Activated CD4-positive, alpha-beta T cell treated with anti-CD3 and anti-CD28 coated beads for 36 hours (primary cell): ENCODE measurements at regions of chr17 and their contacts with region 1.

Region 1: DNA sequence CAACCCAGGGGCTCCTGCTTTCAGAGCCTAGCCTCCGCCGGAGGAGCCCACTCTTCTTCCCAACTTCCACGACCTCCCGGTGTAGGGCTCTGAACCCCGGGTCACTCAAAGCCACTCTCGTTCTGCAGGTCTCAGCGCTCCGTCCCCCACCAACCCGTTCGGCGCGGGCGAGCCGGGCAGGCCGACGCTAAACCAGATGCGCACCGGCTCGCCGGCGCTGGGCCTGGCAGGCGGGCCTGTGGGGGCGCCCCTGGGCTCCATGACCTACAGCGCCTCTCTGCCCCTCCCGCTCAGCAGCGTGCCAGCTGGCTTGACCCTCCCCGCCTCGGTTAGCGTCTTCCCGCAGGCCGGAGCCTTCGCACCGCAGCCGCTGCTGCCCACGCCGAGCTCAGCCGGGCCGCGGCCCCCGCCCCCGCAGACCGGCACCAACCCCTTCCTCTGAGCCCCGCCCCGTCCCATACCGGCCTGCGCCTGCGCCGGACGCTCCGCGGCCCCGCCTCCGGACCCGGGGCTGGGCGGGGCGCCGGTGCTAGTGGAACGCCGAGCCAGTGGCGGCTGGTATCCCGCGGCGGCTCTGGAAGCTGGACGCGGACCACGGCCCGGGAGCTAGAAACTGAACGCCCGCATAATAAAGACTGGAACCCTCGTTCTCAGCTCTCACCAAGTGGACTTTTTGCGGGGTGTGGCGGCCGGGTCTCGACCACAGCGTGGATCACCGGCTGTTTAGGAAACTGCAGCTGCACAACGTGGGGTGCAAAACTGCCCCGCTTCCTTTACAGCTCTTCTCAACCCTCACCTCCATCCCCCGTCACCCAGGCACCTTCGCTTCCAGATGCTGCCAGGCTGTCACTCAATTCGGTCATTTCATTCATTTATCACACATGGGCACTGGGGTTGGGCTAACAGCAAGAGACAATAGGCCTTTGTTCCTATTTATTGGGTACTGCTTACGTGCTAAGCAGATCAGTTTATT is 5.0 kb upstream of the SPATA20 start:
- DNase-seq: peak; percentile 91
- ATAC-seq: peak; percentile 87
- H3K4me3 Mint-ChIP-seq: peak overlapping the region; percentile 72
- H3K27ac Mint-ChIP-seq: peak overlapping the region; percentile 82
- H3K4me1 Mint-ChIP-seq: peaks cover 11% of the 10 kb centered on the region
- H3K27me3 Mint-ChIP-seq: peaks cover 7% of the 10 kb centered on the region

Region 2: GRCh38 chr17:50345432-50346312 is 196.3 kb before region 1 on chr17 and contains the start of gene XYLT2:
- CTCF ChIA-PET with region 1: no interaction called
- POLR2A ChIA-PET with region 1: no interaction called
- intact Hi-C with region 1: no loop called
- DNase-seq: peak; percentile 95
- ATAC-seq: peak; percentile 91
- H3K4me3 Mint-ChIP-seq: peak within 1 kb of the TSS; percentile 90
- H3K27ac Mint-ChIP-seq: peak within 1 kb of the TSS; percentile 94
- H3K4me1 Mint-ChIP-seq: peaks cover 32% of the 10 kb centered on the region
- H3K27me3 Mint-ChIP-seq: no peaks in the 10 kb centered on the region
- total RNA-seq, gene XYLT2: 29.8 to 30.4 TPM

Region 3: DNA sequence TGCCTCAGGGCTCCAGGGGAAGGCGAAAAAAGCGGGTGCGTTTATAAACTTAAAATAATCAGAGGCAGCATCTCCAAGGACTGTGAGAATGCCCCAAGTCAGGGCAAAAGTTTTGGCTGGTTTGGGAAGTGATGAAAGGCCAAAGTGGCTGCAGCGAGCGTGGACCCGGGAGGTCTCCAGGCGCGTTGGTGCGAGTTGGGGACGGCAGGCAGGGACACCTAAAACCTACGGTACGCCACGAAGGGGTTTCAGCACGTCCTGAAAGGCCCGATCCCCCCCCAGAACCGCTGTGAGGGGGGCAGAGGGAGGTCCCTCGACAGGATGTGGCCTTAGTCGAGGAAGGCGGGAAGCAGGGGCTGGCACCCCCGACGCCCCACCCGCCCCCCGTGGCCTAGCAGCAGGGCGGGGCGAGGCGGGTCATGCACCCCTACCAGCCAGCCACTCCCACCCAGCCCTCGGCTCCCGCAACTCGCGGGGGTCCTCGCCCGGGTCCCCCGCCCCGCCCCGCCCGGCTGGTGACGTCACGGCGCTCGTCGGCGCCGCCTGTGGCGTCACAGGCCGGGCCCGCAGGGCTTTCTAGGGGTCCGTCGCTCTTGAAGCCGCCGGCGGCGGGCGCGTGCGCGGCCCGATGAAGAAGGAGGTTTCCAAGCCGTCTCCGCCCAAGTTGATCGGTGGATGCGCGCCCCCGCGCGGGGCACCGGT is 34.0 kb before region 1 on chr17 and contains the start of gene MYCBPAP:
- CTCF ChIA-PET with region 1: interaction called, 6 read pairs
- POLR2A ChIA-PET with region 1: no interaction called
- intact Hi-C with region 1: loop called in 1 of 2 experiments (anchors 1 kb)
- DNase-seq: peak; percentile 85
- ATAC-seq: peak; percentile 38
- H3K4me3 Mint-ChIP-seq: peak within 1 kb of the TSS; percentile 72
- H3K27ac Mint-ChIP-seq: peak within 1 kb of the TSS; percentile 77
- H3K4me1 Mint-ChIP-seq: peaks cover 34% of the 10 kb centered on the region
- H3K27me3 Mint-ChIP-seq: peaks cover 4% of the 10 kb centered on the region
- total RNA-seq, gene MYCBPAP: 1.4 to 1.8 TPM

Region 4: DNA sequence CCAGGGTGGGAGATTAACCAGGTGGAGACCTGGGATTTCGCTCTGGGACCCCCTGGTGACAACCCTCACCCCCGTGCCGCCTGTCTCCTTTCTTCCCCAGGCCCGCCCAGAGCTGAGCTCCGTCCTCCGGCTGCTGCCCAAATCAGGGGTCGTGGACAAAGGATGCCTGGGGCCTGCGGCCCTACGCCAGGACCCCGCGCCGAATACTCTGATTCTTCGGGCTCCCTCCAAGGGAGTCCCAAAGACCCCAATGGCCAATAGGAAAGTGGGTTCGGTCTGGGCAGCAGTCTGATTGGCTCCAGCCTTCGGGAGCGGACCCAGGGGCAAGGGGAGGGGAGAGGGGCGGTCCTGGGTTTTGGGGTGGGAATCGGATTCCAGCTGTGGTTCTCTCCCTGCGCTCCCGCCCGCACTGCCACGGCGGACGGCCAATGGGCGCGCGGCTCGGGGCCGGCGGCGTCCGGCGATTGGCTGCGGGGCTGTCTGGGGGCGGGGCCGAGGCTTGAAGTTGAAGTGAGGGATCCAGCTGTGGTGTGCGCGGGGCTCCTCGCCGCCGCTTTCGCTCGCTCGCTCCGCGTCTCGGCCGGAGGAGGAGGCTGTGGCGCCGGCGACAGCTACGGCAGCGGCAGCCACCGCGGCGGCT is 18.3 kb after region 1 on chr17 and contains the start of gene CACNA1G:
- CTCF ChIA-PET with region 1: interaction called, 8 read pairs
- POLR2A ChIA-PET with region 1: no interaction called
- intact Hi-C with region 1: loop called (anchors 1 kb)
- DNase-seq: peak; percentile 93
- ATAC-seq: peak; percentile 94
- H3K4me3 Mint-ChIP-seq: peak within 1 kb of the TSS; percentile 55
- H3K27ac Mint-ChIP-seq: no peak within 1 kb of the TSS
- H3K4me1 Mint-ChIP-seq: peaks cover 21% of the 10 kb centered on the region
- H3K27me3 Mint-ChIP-seq: peaks cover 51% of the 10 kb centered on the region
- total RNA-seq, gene CACNA1G: not detected